ENCODE measurements at regions of chr7 and their contacts with region 1.

Region 1: GRCh38 chr7:6160191-6160623 is 112.2 kb downstream of the CYTH3 start:
- DNase-seq: peak in 6 of 7 donors; percentile 38 to 74 (median 52)
- H3K4me3 ChIP-seq: no peak overlapping the region
- H3K27ac ChIP-seq: peak overlapping the region in 1 of 5 donors; percentile 34
- H3K4me1 ChIP-seq: peaks cover 0 to 24% of the 10 kb centered on the region in 2 donors
- H3K27me3 ChIP-seq: no peaks in the 10 kb centered on the region
- CTCF ChIP-seq: peak; percentile 29 to 63 (median 50)
- POLR2A ChIP-seq: no peak

Region 2: DNA sequence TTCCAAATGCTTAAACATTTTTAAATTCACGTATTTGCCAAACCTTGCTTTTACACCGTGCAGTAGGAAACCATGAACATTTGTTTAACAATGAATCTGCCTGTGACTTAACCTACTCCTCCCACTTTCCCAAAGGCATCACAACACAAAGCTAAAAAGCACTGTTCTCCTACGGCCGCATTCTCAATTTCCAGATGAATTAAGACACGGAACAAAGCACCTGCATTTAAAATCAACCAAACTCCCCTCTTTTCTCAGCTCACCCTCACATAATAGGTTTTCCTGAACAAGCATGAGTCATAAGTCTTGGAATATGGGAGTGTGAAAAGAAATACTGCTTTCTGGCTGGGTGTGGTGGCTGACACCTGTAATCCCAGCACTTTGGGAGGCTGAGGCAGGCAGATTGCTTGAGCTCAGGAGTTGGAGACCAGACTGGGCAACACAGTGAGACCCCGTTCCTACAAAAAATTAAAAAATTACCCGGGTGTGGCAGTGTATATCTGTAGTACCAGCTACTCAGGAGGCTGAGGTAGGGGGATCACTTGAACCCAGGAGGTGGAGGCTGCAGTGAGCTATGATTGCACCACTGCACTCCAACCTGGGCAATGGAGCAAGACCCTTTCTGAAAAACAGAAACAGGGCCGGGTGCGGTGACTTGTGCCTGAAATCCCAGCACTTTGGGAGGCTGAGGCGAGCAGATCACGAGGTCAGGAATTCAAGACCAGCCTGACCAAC is 163.9 kb after region 1 on chr7:
- intact Hi-C with region 1: loop called (anchors 5 kb)
- DNase-seq: no peak
- H3K4me3 ChIP-seq: no peak overlapping the region
- H3K27ac ChIP-seq: no peak overlapping the region
- H3K4me1 ChIP-seq: no peaks in the 10 kb centered on the region
- H3K27me3 ChIP-seq: no peaks in the 10 kb centered on the region
- CTCF ChIP-seq: no peak
- POLR2A ChIP-seq: no peak

Region 3: GRCh38 chr7:6435486-6436384 is 275.5 kb after region 1 on chr7:
- intact Hi-C with region 1: loop called in 1 of 2 experiments (anchors 10 kb)
- DNase-seq: peak; percentile 71 to 89 (median 75)
- H3K4me3 ChIP-seq: no peak overlapping the region
- H3K27ac ChIP-seq: peak overlapping the region in 3 of 5 donors; percentile 33 to 60 (median 47)
- H3K4me1 ChIP-seq: peaks cover 10 to 26% of the 10 kb centered on the region in 2 donors
- H3K27me3 ChIP-seq: no peaks in the 10 kb centered on the region
- CTCF ChIP-seq: peak; percentile 86 to 97 (median 92)
- POLR2A ChIP-seq: no peak

Measured in adrenal gland (tissue), 19 donors.